IMR-90 (cell line): ENCODE measurements at regions of chr17 and their contacts with region 1.

Region 1: DNA sequence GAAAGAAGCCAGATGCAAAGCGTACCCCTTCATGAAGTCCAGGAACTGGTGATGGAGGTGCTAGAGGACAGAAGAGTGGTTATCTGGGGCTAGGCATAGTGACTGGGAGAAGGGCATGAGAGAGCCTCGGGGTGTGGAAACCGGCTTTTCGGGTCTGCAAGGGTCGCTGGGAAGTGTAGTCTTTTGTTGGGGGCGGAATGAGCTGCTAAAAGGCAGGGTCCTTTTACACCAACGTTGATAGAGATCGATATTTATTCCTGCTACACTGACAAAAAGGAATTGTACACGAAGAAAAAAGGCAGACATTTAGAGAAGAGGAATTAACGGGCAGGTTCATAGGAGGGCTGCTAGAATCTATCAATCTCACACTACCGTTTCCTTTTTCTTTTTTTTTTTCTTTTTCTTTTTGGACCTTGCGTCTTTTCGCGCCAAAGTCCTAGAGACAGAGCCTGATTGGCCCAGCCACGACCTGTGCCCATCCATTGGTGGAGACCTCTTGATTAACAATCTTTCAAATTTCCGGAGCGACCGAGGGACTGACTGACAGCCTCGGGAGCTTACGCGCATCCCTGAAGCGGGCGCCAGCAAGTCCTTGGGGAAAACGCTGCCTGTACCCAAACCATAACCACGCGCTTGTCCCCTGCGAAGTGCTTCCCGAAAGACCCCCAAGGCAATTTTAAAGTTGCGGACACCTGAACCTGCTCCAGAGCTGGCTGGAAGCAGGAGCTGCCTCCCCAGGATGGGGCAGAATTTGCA is 27.7 kb upstream of the DHRS7B start:
- DNase-seq: peak; percentile 62
- ATAC-seq: peak; percentile 99
- H3K4me3 ChIP-seq: peak overlapping the region; percentile 54
- H3K27ac ChIP-seq: no peak overlapping the region; the same call in 1 of the 2 replicates
- H3K4me1 ChIP-seq: no peaks in the 10 kb centered on the region
- H3K27me3 ChIP-seq: no peaks in the 10 kb centered on the region; the same call in 1 of the 2 replicates
- CTCF ChIP-seq: no peak
- POLR2A ChIP-seq: no peak
- RAD21 ChIP-seq: no peak

Region 2: DNA sequence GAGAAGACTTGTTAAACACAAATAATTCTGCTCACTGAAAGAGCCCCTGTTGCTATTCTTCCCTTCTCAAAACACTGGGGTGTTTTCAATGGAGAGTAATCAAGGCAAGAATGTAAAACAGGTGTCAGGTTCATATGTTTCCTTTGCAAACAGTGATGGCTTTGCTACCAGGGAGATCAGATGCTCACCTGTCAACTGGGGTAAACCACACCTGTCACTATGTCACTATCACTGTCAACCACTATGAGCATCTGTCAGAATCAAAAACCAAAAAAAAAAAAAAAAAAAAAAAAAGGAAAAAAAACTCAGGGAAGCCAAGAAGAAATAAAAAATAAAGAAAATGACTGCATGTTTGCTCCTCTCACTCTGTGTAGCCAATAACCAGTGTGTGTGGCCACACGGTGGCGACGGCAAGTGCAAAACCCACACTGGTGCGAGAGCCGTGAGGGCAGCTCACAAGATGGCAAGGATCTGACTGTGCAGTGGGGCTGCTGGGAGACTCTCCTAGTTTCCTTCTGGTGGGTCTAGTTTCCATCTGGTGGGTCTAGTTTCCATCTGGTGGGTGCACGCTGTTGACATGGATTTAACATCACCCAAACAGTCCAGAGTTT is 79.0 kb before region 1 on chr17:
- CTCF ChIA-PET with region 1: no interaction called
- POLR2A ChIA-PET with region 1: no interaction called
- dilution Hi-C with region 1: no loop called
- in situ Hi-C with region 1: no loop called
- intact Hi-C with region 1: no loop called
- DNase-seq: no peak
- ATAC-seq: peak; percentile 47; the same call in 1 of the 2 replicates
- H3K4me3 ChIP-seq: no peak overlapping the region
- H3K27ac ChIP-seq: no peak overlapping the region
- H3K4me1 ChIP-seq: peaks cover 5% of the 10 kb centered on the region
- H3K27me3 ChIP-seq: no peaks in the 10 kb centered on the region
- CTCF ChIP-seq: peak; percentile 27; the same call in 1 of the 2 replicates
- POLR2A ChIP-seq: no peak
- RAD21 ChIP-seq: peak; percentile 40

Region 3: GRCh38 chr17:21058098-21058893 is 40.8 kb before region 1 on chr17:
- CTCF ChIA-PET with region 1: no interaction called
- POLR2A ChIA-PET with region 1: no interaction called
- dilution Hi-C with region 1: no loop called
- in situ Hi-C with region 1: no loop called
- intact Hi-C with region 1: loop called (anchors 5 kb)
- DNase-seq: peak; percentile 45
- ATAC-seq: peak; percentile 82
- H3K4me3 ChIP-seq: no peak overlapping the region
- H3K27ac ChIP-seq: no peak overlapping the region
- H3K4me1 ChIP-seq: no peaks in the 10 kb centered on the region
- H3K27me3 ChIP-seq: peaks cover 13% of the 10 kb centered on the region
- CTCF ChIP-seq: peak; percentile 27; the same call in 1 of the 2 replicates
- POLR2A ChIP-seq: no peak
- RAD21 ChIP-seq: peak; percentile 25

Region 4: GRCh38 chr17:21678393-21679081 is 579.4 kb after region 1 on chr17:
- CTCF ChIA-PET with region 1: no interaction called
- POLR2A ChIA-PET with region 1: no interaction called
- dilution Hi-C with region 1: no loop called
- in situ Hi-C with region 1: no loop called
- intact Hi-C with region 1: no loop called
- DNase-seq: no peak
- ATAC-seq: no peak
- H3K4me3 ChIP-seq: no peak overlapping the region
- H3K27ac ChIP-seq: no peak overlapping the region
- H3K4me1 ChIP-seq: no peaks in the 10 kb centered on the region
- H3K27me3 ChIP-seq: no peaks in the 10 kb centered on the region
- CTCF ChIP-seq: no peak
- POLR2A ChIP-seq: no peak
- RAD21 ChIP-seq: no peak